Naive thymus-derived CD4-positive, alpha-beta T cell (primary cell): ENCODE measurements at regions of chr9 and their contacts with region 1.

Region 1: GRCh38 chr9:78035383-78035993 is 3.9 kb upstream of the GNAQ start:
- DNase-seq: peak in 7 of 9 donors; percentile 53 to 76 (median 72)
- ATAC-seq: peak; percentile 36
- H3K4me3 ChIP-seq: no peak overlapping the region
- H3K4me3 Mint-ChIP-seq: peak overlapping the region in 6 of 10 donors; percentile 3 to 41 (median 24)
- H3K27ac ChIP-seq: no peak overlapping the region
- H3K27ac Mint-ChIP-seq: peak overlapping the region in 7 of 9 donors; percentile 2 to 84 (median 36)
- H3K4me1 ChIP-seq: peaks cover 0 to 20% of the 10 kb centered on the region in 2 donors
- H3K4me1 Mint-ChIP-seq: peaks cover 19 to 35% (median 34%) of the 10 kb centered on the region in 7 donors
- H3K27me3 ChIP-seq: no peaks in the 10 kb centered on the region
- H3K27me3 Mint-ChIP-seq: peaks cover 0 to 4% (median 0%) of the 10 kb centered on the region in 5 donors

Region 2: DNA sequence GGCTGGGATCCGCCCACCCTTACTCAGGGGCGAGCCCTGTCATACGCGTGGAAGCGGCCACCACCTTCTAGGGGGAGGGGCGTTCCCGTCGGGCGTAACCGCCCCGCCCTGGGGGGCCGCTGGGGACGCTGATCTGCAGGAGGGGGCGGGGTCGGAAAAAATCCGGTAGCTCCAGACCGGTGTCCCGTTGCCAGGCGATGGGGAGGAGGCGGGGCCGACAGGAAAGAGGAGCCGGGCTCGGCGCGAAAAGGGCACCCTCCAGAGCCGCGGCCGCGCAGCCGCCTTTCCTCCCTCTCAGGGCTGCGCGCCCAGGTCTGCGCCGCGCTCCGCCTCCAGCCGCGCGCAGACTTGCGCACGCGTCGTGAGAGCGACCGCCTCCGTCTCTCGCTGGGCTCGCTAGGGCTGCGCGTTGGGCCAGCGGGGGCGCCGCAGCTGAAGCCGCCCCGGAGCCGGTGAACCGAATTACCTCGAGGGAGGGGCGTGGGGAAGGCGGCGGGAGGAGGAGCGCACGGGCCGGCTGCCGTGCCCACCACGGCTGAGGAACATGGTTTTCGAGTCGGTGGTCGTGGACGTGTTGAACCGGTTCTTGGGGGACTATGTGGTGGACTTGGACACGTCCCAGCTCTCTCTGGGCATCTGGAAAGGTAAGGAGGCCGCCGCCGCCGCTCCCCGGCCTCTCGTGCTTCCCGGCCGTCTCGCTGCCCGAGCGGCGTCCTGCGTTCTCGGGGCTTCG is 858.2 kb before region 1 on chr9 and contains the start of gene VPS13A:
- CTCF ChIA-PET with region 1: no interaction called
- POLR2A ChIA-PET with region 1: interaction called, 3 read pairs
- intact Hi-C with region 1: loop called (anchors 2 kb)
- DNase-seq: peak; percentile 78 to 92 (median 87)
- ATAC-seq: peak; percentile 92
- H3K4me3 ChIP-seq: peak within 1 kb of the TSS; percentile 89
- H3K4me3 Mint-ChIP-seq: peak within 1 kb of the TSS; percentile 90 to 98 (median 96)
- H3K27ac ChIP-seq: peak within 1 kb of the TSS; percentile 86
- H3K27ac Mint-ChIP-seq: peak within 1 kb of the TSS; percentile 76 to 96 (median 90)
- H3K4me1 ChIP-seq: peaks cover 5 to 17% of the 10 kb centered on the region in 2 donors
- H3K4me1 Mint-ChIP-seq: peaks cover 12 to 39% (median 30%) of the 10 kb centered on the region in 7 donors
- H3K27me3 ChIP-seq: no peaks in the 10 kb centered on the region
- H3K27me3 Mint-ChIP-seq: peaks cover 0 to 20% (median 0%) of the 10 kb centered on the region in 5 donors
- total RNA-seq, gene VPS13A: 37.1 to 52.8 (median 42.6) TPM

Region 3: GRCh38 chr9:77663754-77664153 is 371.7 kb before region 1 on chr9:
- CTCF ChIA-PET with region 1: no interaction called
- POLR2A ChIA-PET with region 1: no interaction called
- intact Hi-C with region 1: loop called in 1 of 2 experiments (anchors 10 kb)
- DNase-seq: no peak
- ATAC-seq: no peak
- H3K4me3 ChIP-seq: no peak overlapping the region
- H3K4me3 Mint-ChIP-seq: no peak overlapping the region
- H3K27ac ChIP-seq: no peak overlapping the region
- H3K27ac Mint-ChIP-seq: no peak overlapping the region
- H3K4me1 ChIP-seq: no peaks in the 10 kb centered on the region
- H3K4me1 Mint-ChIP-seq: no peaks in the 10 kb centered on the region
- H3K27me3 ChIP-seq: no peaks in the 10 kb centered on the region
- H3K27me3 Mint-ChIP-seq: peaks cover 0 to 13% (median 0%) of the 10 kb centered on the region in 5 donors

Region 4: DNA sequence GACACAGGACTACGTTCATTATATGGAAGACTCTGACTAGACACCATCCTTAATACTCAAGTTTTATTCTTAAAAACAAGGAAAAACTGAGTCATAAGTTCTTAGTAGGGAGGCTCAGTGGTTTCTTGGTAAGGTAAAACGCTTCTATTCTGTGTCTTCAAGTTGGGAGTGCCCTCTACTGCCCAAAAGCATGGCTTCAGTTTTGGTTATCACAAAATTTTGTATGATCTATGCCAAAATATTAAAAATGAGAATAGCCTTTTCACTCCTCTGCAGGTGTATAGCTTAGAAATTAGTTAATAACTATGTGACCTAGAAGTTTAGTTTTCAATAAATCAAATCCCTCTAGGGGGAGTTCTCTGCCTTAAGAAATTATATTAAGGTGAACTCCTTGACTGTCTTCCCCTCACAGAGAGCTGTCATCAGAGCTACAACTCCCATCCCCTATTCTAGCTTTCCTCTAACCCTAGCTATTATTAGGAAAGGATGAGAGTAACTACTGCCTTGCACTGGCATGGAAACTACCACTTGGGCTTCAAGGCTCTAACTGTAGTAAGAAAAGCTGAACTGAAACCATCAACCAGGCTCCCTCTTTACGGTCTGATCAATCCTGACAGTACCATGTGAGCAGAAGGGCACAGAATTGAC is 193.6 kb before region 1 on chr9:
- CTCF ChIA-PET with region 1: interaction called, 11 read pairs
- POLR2A ChIA-PET with region 1: no interaction called
- intact Hi-C with region 1: loop called (anchors 1 kb)
- DNase-seq: peak in 5 of 9 donors; percentile 4 to 39 (median 17)
- ATAC-seq: peak; percentile 24
- H3K4me3 ChIP-seq: no peak overlapping the region
- H3K4me3 Mint-ChIP-seq: no peak overlapping the region
- H3K27ac ChIP-seq: no peak overlapping the region
- H3K27ac Mint-ChIP-seq: peak overlapping the region in 3 of 9 donors; percentile 17 to 32 (median 19)
- H3K4me1 ChIP-seq: no peaks in the 10 kb centered on the region
- H3K4me1 Mint-ChIP-seq: peaks cover 7 to 25% (median 13%) of the 10 kb centered on the region in 7 donors
- H3K27me3 ChIP-seq: no peaks in the 10 kb centered on the region
- H3K27me3 Mint-ChIP-seq: no peaks in the 10 kb centered on the region

Region 5: DNA sequence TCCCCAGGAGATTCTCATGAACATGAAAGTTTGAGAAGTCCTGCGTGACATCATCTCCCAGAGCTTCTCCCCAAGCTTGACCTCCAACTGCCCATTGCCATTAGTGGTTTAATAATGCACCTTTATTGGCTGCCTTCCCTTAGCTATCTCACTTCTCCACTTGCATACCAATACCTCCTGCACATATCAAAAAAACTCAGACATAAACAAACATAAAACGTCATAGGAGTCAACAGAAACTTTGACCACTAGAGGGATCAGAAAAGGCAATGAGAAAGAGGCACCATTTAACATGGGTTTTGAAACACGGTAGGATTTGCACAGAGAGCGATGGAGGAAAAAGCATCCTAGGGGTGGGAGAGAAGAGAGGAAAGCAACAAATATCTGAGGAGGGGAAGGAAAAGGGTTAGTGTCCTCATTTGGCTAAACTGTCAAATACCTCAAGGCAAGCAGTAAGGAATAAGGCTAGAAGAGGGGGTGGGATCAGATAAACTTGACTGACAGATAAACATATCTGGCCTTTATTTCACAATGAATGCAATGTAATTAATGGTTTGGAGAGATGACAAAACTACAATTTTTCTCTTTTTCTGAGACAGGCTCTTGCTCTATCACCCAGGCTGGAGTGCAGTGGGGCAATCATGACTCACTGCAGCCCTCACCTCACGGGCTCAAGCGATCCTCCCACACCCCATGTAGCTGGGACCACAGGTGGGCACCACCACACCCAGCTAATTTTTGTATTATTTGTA is 30.8 kb before region 1 on chr9:
- CTCF ChIA-PET with region 1: interaction called, 6 read pairs
- POLR2A ChIA-PET with region 1: no interaction called
- intact Hi-C with region 1: loop called (anchors 1 kb)
- DNase-seq: no peak
- ATAC-seq: peak; percentile 44
- H3K4me3 ChIP-seq: no peak overlapping the region
- H3K4me3 Mint-ChIP-seq: peak overlapping the region in 2 of 10 donors; percentile 0 to 18
- H3K27ac ChIP-seq: no peak overlapping the region
- H3K27ac Mint-ChIP-seq: peak overlapping the region in 1 of 9 donors; percentile 0
- H3K4me1 ChIP-seq: peaks cover 0 to 21% of the 10 kb centered on the region in 2 donors
- H3K4me1 Mint-ChIP-seq: peaks cover 32 to 87% (median 69%) of the 10 kb centered on the region in 7 donors
- H3K27me3 ChIP-seq: no peaks in the 10 kb centered on the region
- H3K27me3 Mint-ChIP-seq: no peaks in the 10 kb centered on the region

Region 6: GRCh38 chr9:78074385-78075291 is 39.1 kb after region 1 on chr9:
- CTCF ChIA-PET with region 1: interaction called, 9 read pairs
- POLR2A ChIA-PET with region 1: interaction called, 5 read pairs
- intact Hi-C with region 1: loop called (anchors 1 kb)
- DNase-seq: peak in 7 of 9 donors; percentile 10 to 54 (median 44)
- ATAC-seq: peak; percentile 67
- H3K4me3 ChIP-seq: peak overlapping the region; percentile 25
- H3K4me3 Mint-ChIP-seq: peak overlapping the region; percentile 64 to 84 (median 76)
- H3K27ac ChIP-seq: peak overlapping the region; percentile 57
- H3K27ac Mint-ChIP-seq: peak overlapping the region; percentile 60 to 94 (median 85)
- H3K4me1 ChIP-seq: peaks cover 19 to 24% of the 10 kb centered on the region in 2 donors
- H3K4me1 Mint-ChIP-seq: peaks cover 38 to 60% (median 58%) of the 10 kb centered on the region in 7 donors
- H3K27me3 ChIP-seq: no peaks in the 10 kb centered on the region
- H3K27me3 Mint-ChIP-seq: peaks cover 0 to 5% (median 0%) of the 10 kb centered on the region in 5 donors

Region 7: GRCh38 chr9:78235756-78236538 is 200.5 kb after region 1 on chr9 and contains the start of gene CEP78:
- CTCF ChIA-PET with region 1: no interaction called
- POLR2A ChIA-PET with region 1: no interaction called
- intact Hi-C with region 1: loop called (anchors 2 kb)
- DNase-seq: peak; percentile 67 to 88 (median 81)
- ATAC-seq: peak; percentile 96
- H3K4me3 ChIP-seq: peak within 1 kb of the TSS; percentile 86
- H3K4me3 Mint-ChIP-seq: peak within 1 kb of the TSS in 4 of 10 donors; percentile 74 to 98 (median 98)
- H3K27ac ChIP-seq: peak within 1 kb of the TSS; percentile 72
- H3K27ac Mint-ChIP-seq: peak within 1 kb of the TSS; percentile 91 to 98 (median 95)
- H3K4me1 ChIP-seq: peaks cover 5 to 12% of the 10 kb centered on the region in 2 donors
- H3K4me1 Mint-ChIP-seq: peaks cover 28 to 46% (median 40%) of the 10 kb centered on the region in 7 donors
- H3K27me3 ChIP-seq: no peaks in the 10 kb centered on the region
- H3K27me3 Mint-ChIP-seq: peaks cover 0 to 3% (median 0%) of the 10 kb centered on the region in 5 donors
- total RNA-seq, gene CEP78: 14.7 to 34.8 (median 23.1) TPM

Region 8: DNA sequence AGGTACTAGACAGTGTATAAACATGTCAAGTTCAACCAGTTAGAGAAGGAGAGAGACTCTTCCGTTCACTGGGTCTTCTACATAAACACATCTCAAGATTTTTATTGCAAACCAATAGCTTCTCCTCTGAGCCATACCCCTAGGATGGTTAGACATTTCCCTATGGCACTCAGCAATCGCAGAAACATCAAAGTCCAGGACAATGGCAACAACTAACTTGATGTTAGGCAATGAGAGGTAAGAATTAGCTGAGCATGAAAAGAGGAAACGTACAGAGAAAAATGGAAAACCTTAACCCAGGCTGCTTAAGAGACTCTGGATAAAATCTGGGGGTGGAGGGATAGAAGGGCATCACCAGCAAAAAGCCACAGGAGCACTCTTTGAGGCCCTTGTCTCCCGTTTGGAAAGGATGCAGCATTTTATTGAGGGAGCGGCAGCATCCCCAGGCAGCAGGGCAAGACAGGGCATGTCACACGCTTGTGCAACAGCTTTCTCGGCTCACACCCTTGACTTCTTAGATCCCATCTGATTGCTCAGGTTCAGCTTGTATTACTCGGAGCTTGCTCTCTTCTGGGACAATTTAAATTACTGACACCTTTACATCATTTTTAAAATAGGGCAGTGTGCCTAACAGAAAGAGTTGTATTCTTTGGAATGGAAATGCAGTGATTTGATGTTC is 252.9 kb after region 1 on chr9:
- CTCF ChIA-PET with region 1: no interaction called
- POLR2A ChIA-PET with region 1: no interaction called
- intact Hi-C with region 1: no loop called
- DNase-seq: no peak
- ATAC-seq: no peak
- H3K4me3 ChIP-seq: no peak overlapping the region
- H3K4me3 Mint-ChIP-seq: no peak overlapping the region
- H3K27ac ChIP-seq: no peak overlapping the region
- H3K27ac Mint-ChIP-seq: no peak overlapping the region
- H3K4me1 ChIP-seq: no peaks in the 10 kb centered on the region
- H3K4me1 Mint-ChIP-seq: peaks cover 5 to 10% (median 10%) of the 10 kb centered on the region in 7 donors
- H3K27me3 ChIP-seq: no peaks in the 10 kb centered on the region
- H3K27me3 Mint-ChIP-seq: peaks cover 0 to 14% (median 5%) of the 10 kb centered on the region in 5 donors